ENCODE measurements at regions of chr6 and their contacts with region 1.

Region 1: GRCh38 chr6:40587240-40588069 is at the start of gene LRFN2:
- DNase-seq: peak; percentile 81 to 84
- H3K4me3 ChIP-seq: peak within 1 kb of the TSS in 2 of 3 donors; percentile 29 to 30
- H3K27ac ChIP-seq: peak within 1 kb of the TSS in 2 of 3 donors; percentile 46 to 57
- H3K4me1 ChIP-seq: peaks cover 7 to 25% of the 10 kb centered on the region in 2 donors
- H3K27me3 ChIP-seq: no peaks in the 10 kb centered on the region
- CTCF ChIP-seq: peak; percentile 37 to 89 (median 72)
- POLR2A ChIP-seq: no peak
- total RNA-seq, gene LRFN2: 0.13 TPM in 1 of 4 donors, not detected in the others

Region 2: GRCh38 chr6:39218873-39219536 is 1368.5 kb before region 1 on chr6:
- intact Hi-C with region 1: loop called (anchors 10 kb)
- DNase-seq: no peak
- H3K4me3 ChIP-seq: no peak overlapping the region
- H3K27ac ChIP-seq: peak overlapping the region; percentile 11 to 56 (median 31)
- H3K4me1 ChIP-seq: peaks cover 69 to 95% of the 10 kb centered on the region in 2 donors
- H3K27me3 ChIP-seq: no peaks in the 10 kb centered on the region
- CTCF ChIP-seq: peak in 1 of 6 experiments; percentile 16
- POLR2A ChIP-seq: no peak